Sciatic nerve (tissue), 2 donors: ENCODE measurements at regions of chr7 and their contacts with region 1.

Region 1: DNA sequence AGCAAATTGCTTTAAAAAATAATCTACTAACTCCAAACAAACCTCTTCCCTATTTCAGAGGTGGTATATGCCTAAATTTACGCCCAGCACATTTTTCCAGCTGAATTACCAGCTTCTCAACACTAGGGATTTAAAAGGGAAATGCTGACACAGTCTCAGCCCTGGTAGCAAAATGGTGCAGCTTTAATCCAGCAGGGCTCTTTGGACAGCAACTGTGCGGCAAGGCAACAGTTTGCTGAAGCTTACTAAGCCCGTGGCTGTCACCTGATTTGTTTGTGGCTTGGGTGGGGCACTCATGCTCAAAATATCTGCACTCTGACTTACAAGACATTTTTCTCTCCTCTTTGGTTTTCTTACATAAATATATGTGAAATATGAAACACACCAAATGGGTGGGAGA is 206.7 kb downstream of the POU6F2 start:
- DNase-seq: no peak
- ATAC-seq: no peak

Region 2: DNA sequence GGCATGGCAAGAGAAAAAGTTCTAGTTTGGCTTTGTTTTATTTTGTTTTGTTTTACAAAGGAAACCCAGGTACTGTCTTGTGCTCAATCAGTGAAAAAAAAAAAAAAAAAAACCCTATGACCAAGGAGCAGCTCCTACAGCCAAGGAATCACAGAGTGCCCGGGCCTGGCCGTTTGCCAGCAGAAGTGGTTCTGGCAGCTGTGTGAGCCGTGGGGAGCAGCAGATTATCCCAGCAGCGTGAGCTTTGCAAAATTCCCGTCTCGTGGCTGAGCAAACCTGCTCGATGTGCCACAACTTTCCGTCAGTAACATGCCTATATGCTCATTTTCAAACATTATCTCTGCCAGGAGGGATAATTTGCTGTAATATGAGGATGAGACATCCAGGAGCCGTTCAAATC is 87.0 kb after region 1 on chr7:
- intact Hi-C with region 1: loop called (anchors 5 kb)
- DNase-seq: peak; percentile 64
- ATAC-seq: no peak